Activated T-helper 2 cell treated with anti-CD3 and anti-CD28 coated beads, Interferon-gamma antibody, Interleukin-2, Interleukin-4, amounts not matched to agents 10 μg/mL and 5 μg/mL and 100 μg/mL, durations not matched to agents 14 hours and 24 hours and 36 hours (primary cell): ENCODE measurements at regions of chr4 and their contacts with region 1.

Region 1: GRCh38 chr4:183444214-183445066 is at the start of gene CDKN2AIP:
- DNase-seq: peak; percentile 94
- H3K4me3 Mint-ChIP-seq: peak within 1 kb of the TSS; percentile 99
- H3K27ac Mint-ChIP-seq: peak within 1 kb of the TSS; percentile 98
- H3K4me1 Mint-ChIP-seq: peaks cover 38% of the 10 kb centered on the region
- H3K27me3 Mint-ChIP-seq: no peaks in the 10 kb centered on the region
- total RNA-seq, gene CDKN2AIP: 23.3 and 25.3 TPM in 2 replicates

Region 2: DNA sequence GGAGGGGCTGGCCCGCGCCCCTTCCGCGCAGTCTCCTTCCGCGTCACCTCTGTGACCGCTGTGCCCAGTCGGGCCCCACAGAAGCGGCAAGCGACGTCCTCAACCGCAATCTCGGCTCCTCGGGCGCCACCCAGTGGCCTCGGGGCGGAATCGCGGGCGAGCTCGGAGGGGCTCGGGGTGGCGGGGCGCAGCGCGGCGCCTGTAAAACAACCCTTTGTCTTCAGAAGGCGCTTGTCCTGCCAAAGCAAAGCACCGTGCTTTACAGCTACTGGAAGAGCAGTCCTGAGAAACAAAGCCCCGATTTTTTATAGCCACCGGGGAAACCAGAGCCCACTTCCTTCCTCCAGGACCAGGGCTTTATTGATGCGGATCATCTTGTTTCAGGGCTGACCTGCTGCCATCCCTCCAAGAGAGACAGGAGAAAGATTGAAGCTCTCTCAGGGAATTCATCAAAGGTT is 37.3 kb before region 1 on chr4:
- intact Hi-C with region 1: loop called (anchors 2 kb)
- DNase-seq: peak; percentile 84
- H3K4me3 Mint-ChIP-seq: peak overlapping the region; percentile 79
- H3K27ac Mint-ChIP-seq: peak overlapping the region; percentile 65
- H3K4me1 Mint-ChIP-seq: peaks cover 13% of the 10 kb centered on the region
- H3K27me3 Mint-ChIP-seq: peaks cover 7% of the 10 kb centered on the region

Region 3: DNA sequence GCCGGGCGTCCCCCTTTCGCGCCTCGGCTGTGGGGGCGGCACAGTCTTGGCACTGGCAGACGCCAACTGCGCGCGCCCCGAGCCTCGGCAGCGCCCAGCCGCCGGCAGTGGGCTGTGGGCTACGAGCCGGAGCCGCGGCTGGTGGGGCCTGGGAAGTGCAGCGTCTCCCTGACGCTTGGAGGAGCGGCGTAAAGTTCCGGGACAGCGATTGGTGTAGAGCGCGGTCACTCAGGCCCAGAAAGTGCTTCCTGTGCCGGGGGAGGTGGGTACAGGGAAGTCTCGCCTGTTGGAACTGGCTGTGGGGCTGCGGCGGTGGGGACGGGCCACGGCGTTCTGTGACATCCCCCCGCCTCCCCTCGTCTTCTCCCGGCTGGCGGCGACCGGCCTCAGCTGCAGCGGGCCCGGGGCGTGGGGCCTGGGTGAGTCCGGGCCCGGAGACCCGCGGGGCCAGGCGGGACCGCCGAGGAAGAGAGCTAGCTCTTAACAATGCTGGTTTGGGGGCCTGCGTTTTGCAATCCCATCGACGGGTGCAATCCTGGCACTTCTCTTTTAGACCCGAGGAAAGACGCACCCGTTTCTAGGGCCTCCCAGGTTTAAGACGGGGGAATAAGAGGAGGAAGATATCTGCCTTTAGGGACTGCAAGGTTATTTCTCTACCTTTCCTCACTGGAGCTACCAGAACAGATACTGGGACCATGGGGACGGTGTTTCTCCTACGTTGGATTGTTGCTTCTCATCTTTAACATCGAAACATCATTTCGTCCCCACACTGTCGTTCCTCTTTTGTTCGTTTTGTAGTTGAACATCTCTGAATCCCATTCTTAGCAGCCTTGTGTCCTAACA is 214.8 kb after region 1 on chr4 and contains the starts of genes RWDD4 and TRAPPC11:
- intact Hi-C with region 1: loop called (anchors 1 kb)
- DNase-seq: peak; percentile 95
- H3K4me3 Mint-ChIP-seq: peak within 1 kb of the TSS; percentile 93
- H3K27ac Mint-ChIP-seq: peak within 1 kb of the TSS; percentile 96
- H3K4me1 Mint-ChIP-seq: peaks cover 22% of the 10 kb centered on the region
- H3K27me3 Mint-ChIP-seq: no peaks in the 10 kb centered on the region
- total RNA-seq, gene RWDD4: 26.3 and 27.6 TPM in 2 replicates
- total RNA-seq, gene TRAPPC11: 28.1 and 32.0 TPM in 2 replicates

Region 4: DNA sequence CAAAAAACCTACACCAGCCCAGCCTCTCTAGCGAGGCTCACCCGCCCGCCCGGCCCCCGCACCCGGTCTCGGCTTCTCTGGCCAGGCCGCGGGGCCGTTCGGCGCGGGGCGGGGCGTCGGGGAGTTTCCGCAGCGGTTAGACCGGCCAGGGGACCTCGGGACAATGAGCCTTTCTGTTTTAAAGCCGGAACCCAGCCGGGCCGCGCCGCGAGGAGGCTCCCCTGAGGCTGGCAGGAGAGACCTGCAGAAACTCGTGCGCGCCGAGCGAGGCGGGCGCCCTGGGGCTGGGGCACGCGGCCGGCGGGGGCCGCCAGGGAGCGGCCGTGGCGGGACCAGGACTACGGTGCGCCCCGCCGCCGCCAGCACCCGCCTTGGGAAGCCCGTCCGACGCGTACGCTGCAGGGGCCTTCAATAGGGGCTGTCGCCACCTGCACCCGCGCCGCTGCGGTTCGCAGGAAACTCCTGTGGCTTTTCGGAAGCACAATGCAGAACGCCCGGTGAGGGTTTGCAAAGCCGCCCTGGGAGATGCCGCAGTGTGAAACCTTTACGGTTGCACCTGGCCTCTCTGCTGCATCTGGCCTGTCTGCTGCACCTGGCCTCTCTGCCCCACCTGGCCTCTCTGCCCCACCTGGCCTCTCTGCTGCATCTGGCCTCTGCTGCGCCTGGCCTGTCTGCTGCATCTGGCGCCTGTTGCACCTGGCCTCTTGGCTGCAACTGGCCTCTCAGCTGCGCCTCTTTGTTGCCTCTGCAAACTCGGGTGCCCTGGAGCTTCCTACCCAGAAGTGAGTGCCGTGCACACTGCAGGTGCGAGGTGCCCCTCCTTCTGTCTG is 278.5 kb after region 1 on chr4:
- intact Hi-C with region 1: loop called (anchors 10 kb)
- DNase-seq: peak; percentile 37
- H3K4me3 Mint-ChIP-seq: peak overlapping the region; percentile 80
- H3K27ac Mint-ChIP-seq: no peak overlapping the region
- H3K4me1 Mint-ChIP-seq: peaks cover 9% of the 10 kb centered on the region
- H3K27me3 Mint-ChIP-seq: peaks cover 31% of the 10 kb centered on the region